ENCODE measurements at regions of chr1 and their contacts with region 1.

Region 1: DNA sequence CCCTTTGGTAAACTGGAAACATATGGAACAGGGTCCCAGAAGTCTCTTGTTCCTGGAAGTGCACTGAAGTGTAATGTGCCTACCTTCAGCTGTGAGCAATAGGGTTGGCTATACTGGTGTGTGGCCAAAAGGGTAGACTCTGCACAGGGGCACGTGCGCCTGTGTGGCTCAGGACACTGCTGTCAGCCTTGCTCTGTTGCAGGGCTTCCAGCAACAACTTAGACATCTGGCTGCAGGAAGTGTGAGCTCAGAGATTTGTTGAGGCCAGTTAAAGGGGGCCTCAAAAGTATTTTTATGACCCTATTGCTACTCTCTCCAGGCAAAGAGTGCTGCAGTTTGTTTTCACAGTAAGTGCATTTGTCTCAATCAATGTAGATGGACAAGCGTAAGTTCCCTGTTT is 7.5 kb downstream of the CTPS1 start:
- DNase-seq: no peak
- H3K4me3 ChIP-seq: no peak overlapping the region
- H3K27ac ChIP-seq: peak overlapping the region; percentile 58 to 63
- H3K4me1 ChIP-seq: peaks cover 9 to 29% of the 10 kb centered on the region in 2 donors
- H3K27me3 ChIP-seq: no peaks in the 10 kb centered on the region
- CTCF ChIP-seq: no peak

Region 2: DNA sequence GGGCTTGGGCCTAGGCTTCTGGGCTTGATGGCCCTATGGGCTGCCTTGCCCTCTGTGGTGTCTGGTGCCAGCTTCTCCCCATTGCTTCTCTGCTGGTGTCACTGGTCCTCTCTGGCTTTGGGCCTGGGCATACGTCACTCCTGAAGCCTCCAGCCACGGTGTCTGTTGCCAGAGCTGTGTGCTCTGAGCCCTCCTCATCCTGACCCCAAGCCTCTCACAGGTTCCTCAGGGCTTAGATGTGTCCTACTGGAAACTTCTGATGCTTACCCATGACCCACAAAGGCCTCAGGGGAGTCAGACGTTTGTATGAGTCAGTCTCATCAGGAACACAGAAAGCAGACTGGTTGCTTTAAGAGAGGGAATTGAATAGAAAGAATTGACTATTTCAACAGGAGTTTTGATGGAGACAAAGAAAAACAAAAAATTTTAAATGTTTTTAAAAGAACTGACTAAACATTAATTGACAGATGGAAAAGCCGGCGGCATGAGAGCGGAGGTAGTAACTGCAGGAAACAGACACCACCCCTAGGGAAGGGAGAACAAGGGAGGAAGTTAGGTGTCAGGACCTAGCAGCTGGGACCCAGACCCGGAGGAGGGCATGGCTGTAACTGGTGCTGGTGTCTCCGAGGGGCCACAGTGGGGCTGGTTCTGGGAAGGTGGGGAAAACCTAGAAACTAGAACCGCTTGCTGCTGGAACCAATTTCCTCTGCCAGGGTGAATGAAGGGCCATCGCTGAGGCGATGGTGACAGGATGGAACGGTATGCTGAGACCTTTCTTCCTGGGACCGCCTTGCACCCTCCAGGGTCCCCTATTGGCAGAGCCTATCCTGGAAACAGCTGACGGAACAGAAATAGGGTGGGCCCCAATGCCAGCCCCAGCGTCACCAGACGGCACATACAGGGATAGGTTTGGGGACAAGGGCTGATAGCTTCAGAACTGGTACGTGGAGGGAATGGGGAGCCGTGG is 84.8 kb before region 1 on chr1:
- intact Hi-C with region 1: no loop called
- DNase-seq: peak in 1 of 2 donors; percentile 83
- H3K4me3 ChIP-seq: no peak overlapping the region
- H3K27ac ChIP-seq: peak overlapping the region; percentile 58 to 61
- H3K4me1 ChIP-seq: peaks cover 0 to 29% of the 10 kb centered on the region in 2 donors
- H3K27me3 ChIP-seq: no peaks in the 10 kb centered on the region
- CTCF ChIP-seq: no peak

Region 3: DNA sequence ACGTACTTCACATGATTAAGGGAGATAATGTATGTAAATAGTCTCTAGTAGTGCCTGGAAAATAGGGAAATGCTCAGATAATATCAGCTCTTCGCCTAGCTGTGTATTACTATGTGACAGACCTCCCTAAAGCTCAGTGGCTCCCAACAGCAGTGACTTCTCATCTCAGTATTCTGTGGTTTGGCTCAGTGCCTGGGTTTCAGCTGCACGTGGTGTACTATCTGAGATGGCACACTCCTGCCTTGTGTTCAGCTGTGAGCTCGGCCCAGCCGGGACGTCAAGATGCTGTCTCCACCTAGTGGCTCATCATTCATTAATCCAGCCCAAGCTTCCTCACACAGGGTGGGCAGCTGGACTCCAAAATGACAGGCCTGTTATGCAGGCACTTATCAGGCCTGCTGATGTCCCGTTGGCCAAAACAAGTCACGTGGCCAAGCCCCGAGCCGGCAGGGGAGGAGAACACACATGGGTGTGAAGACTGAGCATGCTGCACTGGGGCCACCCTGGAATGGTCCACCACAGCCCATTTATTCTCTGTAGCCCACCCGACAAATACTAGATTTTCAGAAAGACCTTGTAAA is 16.8 kb after region 1 on chr1:
- intact Hi-C with region 1: loop called (anchors 2 kb)
- DNase-seq: peak; percentile 94 to 96
- H3K4me3 ChIP-seq: no peak overlapping the region
- H3K27ac ChIP-seq: peak overlapping the region; percentile 16 to 57
- H3K4me1 ChIP-seq: peaks cover 6 to 8% of the 10 kb centered on the region in 2 donors
- H3K27me3 ChIP-seq: no peaks in the 10 kb centered on the region
- CTCF ChIP-seq: peak; percentile 32 to 50 (median 39)

Measured in ascending aorta (tissue), 2 donors.